Activated naive CD4-positive, alpha-beta T cell treated with anti-CD3 and anti-CD28 coated beads for 36 hours (primary cell): ENCODE measurements at regions of chr2 and their contacts with region 1.

Region 1: DNA sequence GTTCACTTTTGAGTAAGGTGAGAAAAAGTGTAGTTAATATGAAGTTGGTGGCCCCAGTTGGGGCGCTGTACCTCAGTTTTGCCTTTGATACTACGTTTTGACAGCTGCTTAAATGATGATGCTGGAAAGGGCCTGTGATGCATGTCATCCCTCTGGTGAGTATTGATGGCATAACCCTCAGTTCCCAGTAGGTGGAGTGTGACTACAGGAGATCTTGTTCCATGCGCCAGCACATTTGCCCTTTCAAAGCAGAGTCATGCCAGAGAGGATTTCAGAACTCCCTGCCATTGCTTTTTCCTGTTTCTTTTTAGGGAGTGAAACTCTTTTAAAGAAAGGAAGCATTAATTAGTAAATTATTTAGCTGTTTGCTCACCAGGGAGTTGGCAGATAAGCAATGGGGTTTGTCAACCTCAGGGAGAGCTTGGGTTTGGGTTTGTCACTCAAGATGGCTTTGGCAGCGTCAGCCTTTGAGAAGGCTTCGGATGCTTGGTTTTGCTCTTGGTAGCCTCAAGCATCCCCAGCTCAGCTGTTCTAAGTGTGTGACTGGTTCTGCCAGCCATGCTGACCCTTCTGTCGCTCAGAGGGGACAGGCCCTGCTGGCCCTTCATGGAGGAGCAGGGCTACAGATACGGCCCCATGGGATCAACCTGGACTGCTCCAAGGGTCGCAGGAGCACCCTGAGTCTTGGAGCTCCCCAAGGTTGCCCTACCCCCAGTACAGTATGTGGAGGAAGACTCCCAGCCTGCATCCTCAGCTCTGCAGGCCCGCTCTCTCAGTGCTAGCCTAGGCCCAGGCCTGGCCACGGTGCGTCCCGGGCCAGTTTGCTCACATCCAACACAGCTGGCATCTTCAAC is 29.1 kb downstream of the ARMC9 start:
- DNase-seq: peak; percentile 73
- H3K4me3 Mint-ChIP-seq: no peak overlapping the region
- H3K27ac Mint-ChIP-seq: no peak overlapping the region
- H3K4me1 Mint-ChIP-seq: no peaks in the 10 kb centered on the region
- H3K27me3 Mint-ChIP-seq: no peaks in the 10 kb centered on the region

Region 2: DNA sequence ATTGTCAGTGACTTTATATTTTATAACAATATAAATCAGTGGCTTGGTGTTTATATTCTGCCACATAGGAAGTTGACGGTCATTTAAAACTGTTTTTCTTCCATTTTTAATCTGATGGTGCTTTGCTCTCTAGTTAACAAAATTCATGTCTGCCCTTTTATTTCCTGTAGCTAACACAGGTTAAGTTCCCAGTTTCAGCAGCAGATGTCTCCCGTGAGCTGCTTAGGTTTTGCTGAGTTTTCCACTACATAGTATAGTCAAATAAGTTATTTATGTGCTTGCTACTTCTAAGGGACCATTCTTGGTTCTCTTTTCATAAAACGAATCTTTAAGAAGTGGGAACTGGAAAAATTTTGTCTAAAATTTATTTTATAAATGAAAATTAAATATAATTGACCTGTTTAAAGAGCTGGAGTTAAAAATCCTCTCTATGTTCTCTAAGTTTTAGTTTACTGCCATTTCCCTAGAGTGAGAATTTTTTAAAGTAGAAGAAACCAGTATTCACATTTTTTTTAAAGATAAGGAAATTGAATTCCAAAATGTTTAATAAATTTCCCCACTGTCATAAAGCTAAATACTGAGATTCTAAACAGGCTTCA is 123.3 kb before region 1 on chr2:
- CTCF ChIA-PET with region 1: interaction called, 6 read pairs
- intact Hi-C with region 1: loop called (anchors 10 kb)
- DNase-seq: peak; percentile 77
- H3K4me3 Mint-ChIP-seq: no peak overlapping the region
- H3K27ac Mint-ChIP-seq: no peak overlapping the region
- H3K4me1 Mint-ChIP-seq: peaks cover 12% of the 10 kb centered on the region
- H3K27me3 Mint-ChIP-seq: no peaks in the 10 kb centered on the region

Region 3: GRCh38 chr2:231348173-231348572 is 120.6 kb after region 1 on chr2:
- CTCF ChIA-PET with region 1: no interaction called
- intact Hi-C with region 1: no loop called
- DNase-seq: no peak
- H3K4me3 Mint-ChIP-seq: no peak overlapping the region
- H3K27ac Mint-ChIP-seq: no peak overlapping the region
- H3K4me1 Mint-ChIP-seq: no peaks in the 10 kb centered on the region
- H3K27me3 Mint-ChIP-seq: no peaks in the 10 kb centered on the region

Region 4: DNA sequence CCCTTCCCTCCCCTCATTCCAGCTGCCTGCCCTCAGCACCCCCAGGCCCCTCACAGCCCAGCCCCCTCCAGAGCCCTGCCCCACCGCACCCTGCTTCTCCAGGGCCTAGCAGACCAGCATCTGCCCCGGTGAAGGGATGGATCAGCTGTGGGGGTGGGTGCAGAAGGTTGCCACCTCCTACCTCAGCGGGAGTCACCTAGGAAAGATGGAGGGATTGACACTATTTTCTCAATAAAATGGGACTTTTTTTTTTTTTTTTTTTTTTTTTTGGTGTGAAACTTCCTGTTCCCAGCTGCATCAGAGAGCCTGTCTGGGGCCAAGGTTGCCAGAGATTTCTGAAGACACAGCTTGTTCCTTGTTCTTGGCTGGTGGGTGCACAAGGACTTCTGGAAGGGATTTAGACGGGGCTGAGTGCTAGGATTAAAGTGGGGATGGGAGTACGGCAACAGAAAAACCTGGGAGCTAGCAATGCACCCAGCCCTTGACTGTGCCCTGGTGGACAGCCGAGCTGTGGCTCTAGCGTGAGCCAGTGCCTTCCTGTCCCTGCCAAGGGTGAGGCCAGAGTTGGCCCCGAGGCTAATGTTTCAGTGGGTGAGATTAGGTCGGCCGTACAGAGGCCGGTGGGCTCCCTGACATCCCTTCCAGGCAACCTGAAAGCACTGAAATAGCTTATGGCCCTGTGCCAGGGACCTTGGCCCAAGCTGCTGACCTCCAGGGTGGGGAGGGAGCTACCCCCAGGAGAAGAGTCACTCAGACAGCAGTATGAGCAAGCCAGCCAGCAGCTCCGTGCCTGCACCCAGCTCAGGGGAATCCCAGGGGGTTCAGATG is 172.5 kb after region 1 on chr2:
- CTCF ChIA-PET with region 1: interaction called, 8 read pairs
- intact Hi-C with region 1: loop called (anchors 1 kb)
- DNase-seq: no peak
- H3K4me3 Mint-ChIP-seq: no peak overlapping the region
- H3K27ac Mint-ChIP-seq: no peak overlapping the region
- H3K4me1 Mint-ChIP-seq: peaks cover 4% of the 10 kb centered on the region
- H3K27me3 Mint-ChIP-seq: peaks cover 12% of the 10 kb centered on the region

Region 5: GRCh38 chr2:231411831-231412617 is 184.5 kb after region 1 on chr2:
- CTCF ChIA-PET with region 1: interaction called, 10 read pairs
- intact Hi-C with region 1: loop called (anchors 1 kb)
- DNase-seq: peak; percentile 81
- H3K4me3 Mint-ChIP-seq: peak overlapping the region; percentile 45
- H3K27ac Mint-ChIP-seq: no peak overlapping the region
- H3K4me1 Mint-ChIP-seq: peaks cover 7% of the 10 kb centered on the region
- H3K27me3 Mint-ChIP-seq: peaks cover 33% of the 10 kb centered on the region